Posterior vena cava (tissue), 2 donors: ENCODE measurements at regions of chr15 and their contacts with region 1.

Region 1: GRCh38 chr15:84715441-84716035 is 401 bp downstream of the SEC11A start:
- DNase-seq: peak; percentile 81

Region 2: GRCh38 chr15:84748274-84749110 is 33.0 kb after region 1 on chr15 and contains the start of gene ZNF592:
- intact Hi-C with region 1: loop called in 1 of 2 experiments (anchors 2 kb)
- DNase-seq: peak; percentile 94
- total RNA-seq, gene ZNF592: 21.3 to 21.8 TPM

Region 3: DNA sequence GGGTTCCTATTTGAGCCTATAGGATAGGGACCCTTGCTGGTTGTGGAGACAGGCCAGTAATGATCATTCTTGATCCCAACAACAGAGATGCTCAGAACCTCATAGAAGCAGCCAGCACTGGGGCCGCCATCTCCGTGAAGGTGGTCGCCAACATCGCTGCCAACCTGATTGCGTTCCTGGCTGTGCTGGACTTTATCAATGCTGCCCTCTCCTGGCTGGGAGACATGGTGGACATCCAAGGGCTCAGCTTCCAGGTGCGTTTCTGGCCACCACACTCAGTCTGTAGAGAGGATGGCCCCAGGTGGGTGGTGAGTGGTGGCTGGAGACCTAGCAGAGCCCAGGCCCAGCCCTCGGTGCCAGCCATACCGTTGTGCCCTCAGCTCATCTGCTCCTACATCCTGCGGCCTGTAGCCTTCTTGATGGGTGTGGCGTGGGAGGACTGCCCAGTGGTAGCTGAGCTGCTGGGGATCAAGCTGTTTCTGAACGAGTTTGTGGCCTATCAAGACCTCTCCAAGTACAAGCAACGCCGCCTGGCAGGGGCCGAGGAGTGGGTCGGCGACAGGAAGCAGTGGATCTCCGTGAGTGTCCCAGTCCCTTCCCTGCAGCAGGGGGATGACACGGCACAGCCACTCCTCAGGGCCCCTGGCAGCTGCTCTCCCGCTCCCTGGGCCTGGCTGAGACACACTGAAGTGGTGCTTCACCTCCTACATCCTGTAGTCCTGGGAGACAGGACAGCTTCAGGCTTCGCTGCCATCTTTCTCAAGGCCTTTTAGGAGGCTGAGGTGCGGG is 219.6 kb after region 1 on chr15:
- intact Hi-C with region 1: no loop called
- DNase-seq: no peak